ENCODE measurements at regions of chr10 and their contacts with region 1.

Region 1: GRCh38 chr10:88687853-88688467 is 18.1 kb upstream of the LIPK start:
- DNase-seq: peak; percentile 31
- H3K4me3 ChIP-seq: no peak overlapping the region
- H3K27ac ChIP-seq: no peak overlapping the region
- H3K4me1 ChIP-seq: no peaks in the 10 kb centered on the region
- H3K27me3 ChIP-seq: no peaks in the 10 kb centered on the region
- CTCF ChIP-seq: peak; percentile 45 to 53
- POLR2A ChIP-seq: no peak

Region 2: GRCh38 chr10:88181902-88182600 is 505.9 kb before region 1 on chr10:
- CTCF ChIA-PET with region 1: no interaction called
- POLR2A ChIA-PET with region 1: no interaction called
- dilution Hi-C with region 1: no loop called
- intact Hi-C with region 1: no loop called
- DNase-seq: no peak
- H3K4me3 ChIP-seq: no peak overlapping the region
- H3K27ac ChIP-seq: no peak overlapping the region
- H3K4me1 ChIP-seq: no peaks in the 10 kb centered on the region
- H3K27me3 ChIP-seq: no peaks in the 10 kb centered on the region
- CTCF ChIP-seq: no peak
- POLR2A ChIP-seq: no peak

Region 3: GRCh38 chr10:88791924-88792323 is 104.0 kb after region 1 on chr10:
- CTCF ChIA-PET with region 1: interaction called, 30 read pairs
- POLR2A ChIA-PET with region 1: no interaction called
- dilution Hi-C with region 1: no loop called
- intact Hi-C with region 1: loop called (anchors 1 kb)
- DNase-seq: peak; percentile 33
- H3K4me3 ChIP-seq: no peak overlapping the region
- H3K27ac ChIP-seq: no peak overlapping the region
- H3K4me1 ChIP-seq: no peaks in the 10 kb centered on the region
- H3K27me3 ChIP-seq: no peaks in the 10 kb centered on the region
- CTCF ChIP-seq: peak; percentile 49 to 67
- POLR2A ChIP-seq: no peak

Region 4: GRCh38 chr10:88810196-88810961 is 122.4 kb after region 1 on chr10:
- CTCF ChIA-PET with region 1: interaction called, 25 read pairs
- POLR2A ChIA-PET with region 1: no interaction called
- dilution Hi-C with region 1: no loop called
- intact Hi-C with region 1: loop called (anchors 1 kb)
- DNase-seq: peak; percentile 64
- H3K4me3 ChIP-seq: no peak overlapping the region
- H3K27ac ChIP-seq: no peak overlapping the region
- H3K4me1 ChIP-seq: peaks cover 3% of the 10 kb centered on the region
- H3K27me3 ChIP-seq: no peaks in the 10 kb centered on the region
- CTCF ChIP-seq: peak; percentile 69 to 72
- POLR2A ChIP-seq: no peak

Region 5: DNA sequence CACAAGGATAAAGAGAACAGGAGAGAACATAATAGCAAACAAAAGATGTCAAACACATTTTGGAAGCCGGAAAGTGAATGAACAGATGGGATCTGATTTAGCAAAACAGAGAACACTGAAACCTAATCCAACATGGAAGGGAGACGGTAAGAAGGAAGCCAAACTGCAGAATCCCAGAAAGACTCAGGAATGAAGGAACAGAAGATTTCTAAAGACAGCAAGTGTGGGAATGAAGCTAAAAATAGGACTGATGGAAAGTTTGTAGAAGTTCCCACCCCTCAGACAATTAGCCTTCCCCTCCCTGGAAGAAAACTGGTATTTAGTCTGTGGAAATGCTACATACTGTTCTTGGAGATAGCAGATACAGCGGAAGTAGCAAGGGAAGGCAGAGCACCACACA is 806.6 kb after region 1 on chr10:
- CTCF ChIA-PET with region 1: no interaction called
- POLR2A ChIA-PET with region 1: no interaction called
- dilution Hi-C with region 1: no loop called
- intact Hi-C with region 1: no loop called
- DNase-seq: no peak
- H3K4me3 ChIP-seq: no peak overlapping the region
- H3K27ac ChIP-seq: no peak overlapping the region
- H3K4me1 ChIP-seq: no peaks in the 10 kb centered on the region
- H3K27me3 ChIP-seq: no peaks in the 10 kb centered on the region
- CTCF ChIP-seq: no peak
- POLR2A ChIP-seq: no peak

Measured in endothelial cell of umbilical vein (primary cell).